ENCODE measurements at regions of chr19 and their contacts with region 1.

Region 1: DNA sequence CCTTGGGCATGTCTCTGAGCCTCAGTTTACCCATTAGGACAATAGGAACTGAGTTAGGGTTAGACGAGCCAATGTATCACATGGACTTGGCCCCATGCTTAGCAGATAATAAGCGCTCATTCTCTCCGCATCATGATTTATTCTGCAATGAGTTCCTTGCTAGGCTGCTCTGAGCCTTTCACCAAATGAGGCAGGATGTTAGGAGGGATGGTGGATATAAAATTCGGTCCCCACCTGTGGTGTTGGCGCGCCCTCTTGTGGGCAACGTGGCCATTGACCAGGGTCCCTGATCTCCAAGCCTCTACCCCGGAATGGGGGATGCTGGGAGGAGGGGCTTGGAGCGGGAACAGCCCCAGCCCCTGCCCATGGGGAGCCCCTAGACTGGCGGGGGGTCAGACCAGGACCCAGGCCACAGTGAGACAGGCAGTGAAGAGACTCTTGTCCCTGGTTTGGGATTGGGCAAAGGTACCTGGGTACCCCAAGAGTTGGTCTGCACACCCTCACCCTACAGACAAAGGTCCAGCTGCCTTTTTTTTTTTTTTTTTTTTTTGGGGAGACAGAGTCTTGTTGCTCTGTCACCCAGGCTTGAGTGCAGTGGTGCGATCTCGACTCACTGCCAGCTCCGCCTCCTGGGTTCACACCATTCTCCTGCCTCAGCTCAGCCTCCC is 43.9 kb downstream of the CERS4 start:
- DNase-seq: peak; percentile 49 to 69
- ATAC-seq: peak; percentile 75 to 78
- H3K4me3 ChIP-seq: no peak overlapping the region
- H3K27ac ChIP-seq: no peak overlapping the region
- H3K4me1 ChIP-seq: no peaks in the 10 kb centered on the region
- H3K27me3 ChIP-seq: no peaks in the 10 kb centered on the region
- CTCF ChIP-seq: peak; percentile 88 to 93 (median 90)
- POLR2A ChIP-seq: no peak

Region 2: GRCh38 chr19:7852851-7853769 is 399.9 kb before region 1 on chr19:
- in situ Hi-C with region 1: no loop called
- intact Hi-C with region 1: loop called (anchors 5 kb)
- DNase-seq: peak in 1 of 2 donors; percentile 44
- ATAC-seq: peak; percentile 45 to 72
- H3K4me3 ChIP-seq: no peak overlapping the region
- H3K27ac ChIP-seq: no peak overlapping the region
- H3K4me1 ChIP-seq: peaks cover 0 to 6% of the 10 kb centered on the region in 2 donors
- H3K27me3 ChIP-seq: peaks cover 0 to 3% (median 0%) of the 10 kb centered on the region in 3 donors
- CTCF ChIP-seq: peak; percentile 52 to 86 (median 79)
- POLR2A ChIP-seq: no peak

Region 3: GRCh38 chr19:7943444-7944176 is 309.4 kb before region 1 on chr19 and contains the start of gene TIMM44:
- in situ Hi-C with region 1: loop called (anchors 5 to 10 kb)
- intact Hi-C with region 1: loop called (anchors 2 kb)
- DNase-seq: peak; percentile 100
- ATAC-seq: peak; percentile 97 to 98
- H3K4me3 ChIP-seq: peak within 1 kb of the TSS; percentile 67 to 97 (median 82)
- H3K27ac ChIP-seq: peak within 1 kb of the TSS; percentile 94 to 100 (median 98)
- H3K4me1 ChIP-seq: peaks cover 10 to 19% of the 10 kb centered on the region in 2 donors
- H3K27me3 ChIP-seq: no peaks in the 10 kb centered on the region
- CTCF ChIP-seq: no peak
- POLR2A ChIP-seq: peak; percentile 92 to 97
- total RNA-seq, gene TIMM44: 53.9 to 168 (median 94.1) TPM

Region 4: GRCh38 chr19:7970716-7971448 is 282.2 kb before region 1 on chr19:
- in situ Hi-C with region 1: no loop called
- intact Hi-C with region 1: loop called (anchors 1 kb)
- DNase-seq: peak in 1 of 2 donors; percentile 35
- ATAC-seq: no peak
- H3K4me3 ChIP-seq: no peak overlapping the region
- H3K27ac ChIP-seq: no peak overlapping the region
- H3K4me1 ChIP-seq: peaks cover 18 to 19% of the 10 kb centered on the region in 2 donors
- H3K27me3 ChIP-seq: no peaks in the 10 kb centered on the region
- CTCF ChIP-seq: peak; percentile 52 to 77 (median 69)
- POLR2A ChIP-seq: no peak

Region 5: DNA sequence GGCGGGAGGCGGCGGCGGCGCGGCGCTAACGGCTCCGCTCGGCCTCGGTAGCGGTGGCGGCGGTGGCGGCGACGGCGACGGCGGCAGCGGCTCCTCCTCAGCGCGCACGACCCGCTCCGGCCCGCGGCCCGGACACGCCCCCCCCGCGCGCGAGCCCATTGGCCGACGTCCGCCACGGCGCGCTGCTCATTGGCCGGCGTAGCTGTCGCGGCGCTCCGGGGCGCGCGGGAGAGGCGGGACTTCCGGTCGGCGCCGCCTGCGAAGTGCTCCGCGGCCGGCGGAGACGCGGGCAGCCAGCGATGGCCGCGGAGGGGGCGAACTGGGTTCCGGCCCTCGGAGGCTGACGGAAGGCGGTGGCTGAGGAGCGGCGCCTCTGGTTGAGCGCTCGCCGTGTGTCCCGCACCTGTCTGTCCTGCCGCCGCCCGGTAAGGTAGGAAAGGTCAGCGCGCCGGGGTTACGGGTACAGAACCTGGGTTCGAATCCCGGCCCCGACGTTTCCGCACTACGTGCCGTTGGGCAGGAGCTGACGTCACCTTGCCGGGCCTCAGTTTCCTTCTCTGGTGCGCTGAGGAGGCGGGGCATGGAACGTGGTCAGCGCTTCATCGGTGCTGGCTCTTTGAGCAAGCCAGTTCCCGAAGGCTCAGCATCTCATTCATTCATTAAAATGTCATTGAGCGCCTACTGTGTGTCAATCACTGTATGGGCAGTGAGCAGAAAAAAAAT is 247.4 kb before region 1 on chr19 and contains the start of gene ELAVL1:
- in situ Hi-C with region 1: loop called in 2 of 4 experiments (anchors 25 kb)
- intact Hi-C with region 1: no loop called
- DNase-seq: peak; percentile 80 to 87
- ATAC-seq: peak; percentile 75 to 79
- H3K4me3 ChIP-seq: peak within 1 kb of the TSS; percentile 80 to 91 (median 84)
- H3K27ac ChIP-seq: peak within 1 kb of the TSS; percentile 80 to 93 (median 86)
- H3K4me1 ChIP-seq: peaks cover 37 to 40% of the 10 kb centered on the region in 2 donors
- H3K27me3 ChIP-seq: no peaks in the 10 kb centered on the region
- CTCF ChIP-seq: peak in 1 of 5 experiments; percentile 14
- POLR2A ChIP-seq: peak; percentile 45 to 70
- total RNA-seq, gene ELAVL1: 18.2 to 40.5 (median 28.9) TPM

Region 6: GRCh38 chr19:8158411-8159074 is 94.5 kb before region 1 on chr19:
- in situ Hi-C with region 1: loop called (anchors 5 to 10 kb)
- intact Hi-C with region 1: loop called (anchors 1 kb)
- DNase-seq: peak in 1 of 2 donors; percentile 21
- ATAC-seq: no peak
- H3K4me3 ChIP-seq: no peak overlapping the region
- H3K27ac ChIP-seq: no peak overlapping the region
- H3K4me1 ChIP-seq: peaks cover 0 to 4% of the 10 kb centered on the region in 2 donors
- H3K27me3 ChIP-seq: no peaks in the 10 kb centered on the region
- CTCF ChIP-seq: peak; percentile 23 to 55 (median 37)
- POLR2A ChIP-seq: no peak

Region 7: GRCh38 chr19:8208922-8209461 is 44.1 kb before region 1 on chr19 and contains the start of gene CERS4:
- in situ Hi-C with region 1: no loop called
- intact Hi-C with region 1: loop called (anchors 1 kb)
- DNase-seq: peak; percentile 16 to 24
- ATAC-seq: peak; percentile 39 to 52
- H3K4me3 ChIP-seq: peak within 1 kb of the TSS; percentile 50 to 63 (median 58)
- H3K27ac ChIP-seq: peak within 1 kb of the TSS; percentile 30 to 53 (median 44)
- H3K4me1 ChIP-seq: no peaks in the 10 kb centered on the region
- H3K27me3 ChIP-seq: peaks cover 7 to 14% (median 10%) of the 10 kb centered on the region in 3 donors
- CTCF ChIP-seq: no peak
- POLR2A ChIP-seq: no peak
- total RNA-seq, gene CERS4: 2.1 to 4.0 (median 2.7) TPM

Region 8: GRCh38 chr19:8988204-8988603 is 735.1 kb after region 1 on chr19:
- in situ Hi-C with region 1: no loop called
- intact Hi-C with region 1: no loop called
- DNase-seq: no peak
- ATAC-seq: no peak
- H3K4me3 ChIP-seq: no peak overlapping the region
- H3K27ac ChIP-seq: no peak overlapping the region
- H3K4me1 ChIP-seq: no peaks in the 10 kb centered on the region
- H3K27me3 ChIP-seq: no peaks in the 10 kb centered on the region
- CTCF ChIP-seq: no peak
- POLR2A ChIP-seq: no peak